ENCODE measurements at regions of chr5 and their contacts with region 1.

Region 1: DNA sequence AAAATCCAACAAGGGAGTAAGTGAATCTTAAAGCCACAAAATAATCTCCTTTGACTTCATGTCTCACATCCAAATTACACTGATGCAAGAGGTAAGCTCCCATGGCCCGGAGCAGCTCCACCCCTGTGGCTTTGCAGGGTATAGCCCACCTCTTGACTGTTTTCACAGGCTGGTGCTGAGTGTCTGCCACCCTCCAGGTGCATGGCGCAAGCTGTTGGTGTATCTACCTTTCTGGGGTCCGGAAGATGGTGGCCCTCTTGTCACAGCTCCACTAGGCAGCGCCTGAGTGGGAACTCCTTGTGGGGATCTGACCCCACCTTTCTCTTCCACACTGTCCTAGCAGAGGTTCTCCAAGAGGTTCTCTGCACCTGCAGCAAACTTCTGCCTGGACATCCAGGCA is 1051.1 kb upstream of the CDH6 start:
- DNase-seq: no peak
- ATAC-seq: no peak
- H3K4me3 ChIP-seq: no peak overlapping the region
- H3K27ac ChIP-seq: no peak overlapping the region
- H3K4me1 ChIP-seq: no peaks in the 10 kb centered on the region
- H3K27me3 ChIP-seq: no peaks in the 10 kb centered on the region
- CTCF ChIP-seq: no peak

Region 2: GRCh38 chr5:30106596-30106995 is 35.8 kb before region 1 on chr5:
- intact Hi-C with region 1: loop called in 1 of 10 experiments (anchors 2 kb)
- DNase-seq: no peak
- ATAC-seq: no peak
- H3K4me3 ChIP-seq: no peak overlapping the region
- H3K27ac ChIP-seq: no peak overlapping the region
- H3K4me1 ChIP-seq: no peaks in the 10 kb centered on the region
- H3K27me3 ChIP-seq: no peaks in the 10 kb centered on the region
- CTCF ChIP-seq: no peak

Measured in heart right ventricle (tissue), 16 donors.